Aorta (tissue), 5 donors: ENCODE measurements at regions of chr1 and their contacts with region 1.

Region 1: GRCh38 chr1:208203127-208203847 is 40.9 kb downstream of the PLXNA2 start:
- DNase-seq: peak in 1 of 2 donors; percentile 86
- ATAC-seq: peak; percentile 47
- H3K4me3 ChIP-seq: no peak overlapping the region
- H3K27ac ChIP-seq: peak overlapping the region; percentile 29 to 78
- H3K4me1 ChIP-seq: peaks cover 2 to 12% of the 10 kb centered on the region in 2 donors
- H3K27me3 ChIP-seq: no peaks in the 10 kb centered on the region

Region 2: DNA sequence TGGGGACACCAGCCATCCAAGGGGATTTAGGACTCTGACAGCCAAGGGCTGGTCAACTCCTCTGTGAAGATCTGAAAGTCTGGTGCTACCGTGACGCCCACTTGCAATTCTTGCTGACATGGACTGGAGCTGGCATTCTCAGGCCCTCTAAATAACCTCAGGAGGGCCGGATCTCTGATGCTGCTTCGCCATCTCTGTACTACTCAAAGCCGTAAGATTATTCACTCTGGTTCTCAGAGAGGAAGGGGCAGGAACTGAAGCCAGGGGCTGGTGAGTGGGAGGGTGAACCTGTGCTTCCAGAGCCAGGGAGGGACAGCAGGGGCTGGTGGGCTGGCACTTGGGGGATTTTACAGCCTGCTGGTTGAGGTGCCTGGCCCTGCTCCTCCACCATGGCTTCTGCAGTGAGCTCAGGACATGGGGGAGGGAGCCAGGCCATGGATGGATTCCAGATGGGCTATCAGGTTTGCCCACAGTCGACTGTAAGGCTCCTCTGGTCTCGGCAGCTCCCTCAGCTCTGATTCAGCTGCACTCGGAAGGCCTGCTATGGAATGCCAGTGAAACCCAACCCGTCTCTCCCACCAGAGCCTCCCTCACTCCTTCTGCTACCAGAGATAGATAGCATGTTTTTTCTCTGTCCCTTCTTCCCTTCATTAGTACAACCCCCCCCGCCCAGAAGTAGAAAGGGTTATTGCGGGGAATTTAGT is 43.6 kb before region 1 on chr1:
- intact Hi-C with region 1: no loop called
- DNase-seq: peak in 1 of 2 donors; percentile 69
- ATAC-seq: peak; percentile 37
- H3K4me3 ChIP-seq: no peak overlapping the region
- H3K27ac ChIP-seq: no peak overlapping the region
- H3K4me1 ChIP-seq: peaks cover 0 to 4% of the 10 kb centered on the region in 2 donors
- H3K27me3 ChIP-seq: no peaks in the 10 kb centered on the region

Region 3: GRCh38 chr1:208184088-208184911 is 19.0 kb before region 1 on chr1:
- intact Hi-C with region 1: loop called in 1 of 2 experiments (anchors 1 kb)
- DNase-seq: peak in 1 of 2 donors; percentile 52
- ATAC-seq: peak; percentile 84
- H3K4me3 ChIP-seq: no peak overlapping the region
- H3K27ac ChIP-seq: no peak overlapping the region
- H3K4me1 ChIP-seq: no peaks in the 10 kb centered on the region
- H3K27me3 ChIP-seq: no peaks in the 10 kb centered on the region

Region 4: GRCh38 chr1:208238710-208239472 is 35.6 kb after region 1 on chr1:
- intact Hi-C with region 1: loop called (anchors 2 to 5 kb)
- DNase-seq: no peak
- ATAC-seq: peak; percentile 68
- H3K4me3 ChIP-seq: no peak overlapping the region
- H3K27ac ChIP-seq: no peak overlapping the region
- H3K4me1 ChIP-seq: peaks cover 3 to 5% of the 10 kb centered on the region in 2 donors
- H3K27me3 ChIP-seq: no peaks in the 10 kb centered on the region

Region 5: GRCh38 chr1:208318150-208318734 is 115.0 kb after region 1 on chr1:
- intact Hi-C with region 1: no loop called
- DNase-seq: no peak
- ATAC-seq: no peak
- H3K4me3 ChIP-seq: no peak overlapping the region
- H3K27ac ChIP-seq: no peak overlapping the region
- H3K4me1 ChIP-seq: peaks cover 0 to 3% of the 10 kb centered on the region in 2 donors
- H3K27me3 ChIP-seq: no peaks in the 10 kb centered on the region